ENCODE measurements at regions of chr7 and their contacts with region 1.

Region 1: DNA sequence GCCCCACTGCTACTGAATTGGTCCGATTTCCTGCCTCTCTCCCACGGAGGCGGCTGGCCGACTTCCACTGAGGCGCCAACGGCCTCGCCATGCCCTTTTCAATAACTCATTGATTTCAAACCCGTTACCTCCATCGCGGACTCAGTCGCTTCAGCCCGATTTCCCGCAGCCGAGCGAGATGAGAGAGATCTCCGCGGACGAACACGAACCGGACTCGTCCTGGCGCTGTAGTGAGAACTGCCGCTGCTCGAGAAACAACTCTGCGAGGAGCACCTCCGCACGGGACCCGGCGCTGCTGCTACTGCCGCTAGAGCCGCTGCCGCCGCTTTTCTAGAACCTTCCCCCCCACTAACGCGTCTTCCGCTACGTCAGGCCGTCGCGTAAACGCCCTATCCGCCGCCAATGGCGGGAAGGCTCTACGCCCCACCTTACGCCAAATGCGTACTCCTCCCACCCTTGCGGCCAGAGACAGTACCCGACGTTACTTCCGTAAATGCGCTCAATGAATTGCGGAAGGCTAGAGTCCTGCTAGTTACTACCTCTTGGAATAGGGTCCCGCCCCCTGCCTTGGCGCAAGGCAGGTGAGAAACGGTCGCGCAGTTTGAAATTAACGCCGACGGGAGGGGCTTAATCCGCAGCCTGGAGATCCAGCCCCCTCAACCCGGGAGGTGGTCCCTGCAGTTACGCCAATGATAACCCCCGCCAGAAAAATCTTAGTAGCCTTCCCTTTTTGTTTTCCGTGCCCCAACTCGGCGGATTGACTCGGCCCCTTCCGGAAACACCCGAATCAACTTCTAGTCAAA is at the start of gene HNRNPA2B1:
- DNase-seq: peak; percentile 98
- ATAC-seq: peak; percentile 71
- H3K4me3 ChIP-seq: peak within 1 kb of the TSS; percentile 99
- H3K27ac ChIP-seq: peak within 1 kb of the TSS; percentile 99
- H3K4me1 ChIP-seq: peaks cover 43% of the 10 kb centered on the region
- H3K27me3 ChIP-seq: no peaks in the 10 kb centered on the region; a peak in 1 of 5 replicates
- CTCF ChIP-seq: peak; percentile 12; the same call in 1 of the 2 replicates
- EP300 ChIP-seq: no peak; a peak in 1 of 4 replicates
- POLR2A ChIP-seq: peak; percentile 99 to 100
- RAD21 ChIP-seq: peak; percentile 33; the same call in 1 of the 2 replicates
- total RNA-seq, gene HNRNPA2B1: 412 and 636 TPM in 2 replicates

Region 2: GRCh38 chr7:25894902-25895791 is 305.5 kb before region 1 on chr7:
- CTCF ChIA-PET with region 1: no interaction called
- POLR2A ChIA-PET with region 1: no interaction called
- in situ Hi-C with region 1: no loop called
- intact Hi-C with region 1: loop called (anchors 5 kb)
- DNase-seq: no peak
- ATAC-seq: peak; percentile 76
- H3K4me3 ChIP-seq: no peak overlapping the region; a peak in 1 of 6 replicates
- H3K27ac ChIP-seq: no peak overlapping the region
- H3K4me1 ChIP-seq: peaks cover 21% of the 10 kb centered on the region
- H3K27me3 ChIP-seq: peaks cover 0 to under 1% of the 10 kb centered on the region in 2 experiments; a peak in 1 of 5 replicates
- CTCF ChIP-seq: peak; percentile 60
- EP300 ChIP-seq: no peak
- POLR2A ChIP-seq: no peak
- RAD21 ChIP-seq: 0 out of 2 replicates have a peak, but pooled peaks have one; percentile 10

Region 3: DNA sequence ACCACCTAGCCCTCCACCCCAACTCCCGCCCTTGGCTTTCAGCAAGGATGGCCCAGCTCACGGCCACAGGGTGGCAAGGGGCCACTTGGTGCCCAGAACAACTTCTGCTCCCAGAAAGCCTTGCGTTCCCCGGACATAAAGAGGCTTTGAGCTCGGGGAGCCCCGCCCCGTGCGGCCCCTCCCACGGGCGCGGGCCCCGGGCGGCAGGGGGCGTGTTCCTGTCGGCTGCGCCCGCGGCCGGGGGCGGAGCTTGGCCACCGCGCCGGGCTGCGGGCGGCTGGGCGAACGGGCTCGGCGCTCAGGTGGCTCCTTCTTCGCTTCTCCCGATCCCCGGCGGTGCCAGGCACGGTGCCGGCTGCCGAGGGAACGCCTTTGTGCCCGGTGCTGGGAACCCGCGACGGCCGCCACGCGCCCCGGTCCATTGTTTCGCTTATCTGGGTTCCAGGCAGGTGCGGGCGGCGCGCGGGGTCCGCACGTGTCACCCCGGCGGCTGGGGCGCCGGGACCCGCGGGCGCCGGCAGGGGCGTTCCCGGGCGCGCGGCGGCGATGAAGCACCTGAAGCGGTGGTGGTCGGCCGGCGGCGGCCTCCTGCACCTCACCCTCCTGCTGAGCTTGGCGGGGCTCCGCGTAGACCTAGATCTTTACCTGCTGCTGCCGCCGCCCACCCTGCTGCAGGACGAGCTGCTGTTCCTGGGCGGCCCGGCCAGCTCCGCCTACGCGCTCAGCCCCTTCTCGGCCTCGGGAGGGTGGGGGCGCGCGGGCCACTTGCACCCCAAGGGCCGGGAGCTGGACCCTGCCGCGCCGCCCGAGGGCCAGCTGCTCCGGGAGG is 48.5 kb before region 1 on chr7 and contains the start of gene NFE2L3:
- CTCF ChIA-PET with region 1: no interaction called
- POLR2A ChIA-PET with region 1: interaction called, 36 read pairs
- in situ Hi-C with region 1: no loop called
- intact Hi-C with region 1: loop called (anchors 2 kb)
- DNase-seq: peak; percentile 76
- ATAC-seq: peak; percentile 83
- H3K4me3 ChIP-seq: peak within 1 kb of the TSS; percentile 58 to 72 (median 70)
- H3K27ac ChIP-seq: no peak within 1 kb of the TSS
- H3K4me1 ChIP-seq: peaks cover 53% of the 10 kb centered on the region
- H3K27me3 ChIP-seq: peaks cover 0 to 13% of the 10 kb centered on the region in 2 experiments; a peak in 3 of 5 replicates
- CTCF ChIP-seq: peak; percentile 48; the same call in 1 of the 2 replicates
- EP300 ChIP-seq: no peak
- POLR2A ChIP-seq: peak; percentile 34 to 69; a peak in 3 of 4 replicates
- RAD21 ChIP-seq: peak; percentile 19
- total RNA-seq, gene NFE2L3: 8.8 and 19.4 TPM in 2 replicates

Region 4: DNA sequence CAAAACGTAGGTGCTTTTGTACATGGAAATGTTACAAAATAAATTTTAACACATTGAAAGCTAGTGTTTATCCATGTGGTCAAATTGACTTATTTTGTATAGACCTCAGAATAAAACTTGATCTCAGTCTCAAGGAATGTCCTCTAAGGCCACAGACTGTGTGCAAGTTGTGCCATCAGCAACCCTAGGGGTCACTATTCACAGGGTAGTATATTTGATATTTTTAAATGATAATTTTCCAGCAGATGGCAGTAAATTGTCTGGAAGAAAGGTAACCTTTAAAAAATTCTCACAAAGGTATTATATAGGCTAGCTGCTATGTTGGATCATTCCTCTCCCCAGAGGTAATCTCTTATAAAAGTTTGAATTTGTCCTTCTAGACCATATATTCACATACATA is 78.1 kb after region 1 on chr7:
- CTCF ChIA-PET with region 1: no interaction called
- POLR2A ChIA-PET with region 1: interaction called, 4 read pairs
- in situ Hi-C with region 1: no loop called
- intact Hi-C with region 1: loop called (anchors 2 kb)
- DNase-seq: peak; percentile 49
- ATAC-seq: peak; percentile 79
- H3K4me3 ChIP-seq: peak overlapping the region in 2 of 3 experiments; percentile 58 to 64; a peak in 4 of 6 replicates
- H3K27ac ChIP-seq: no peak overlapping the region
- H3K4me1 ChIP-seq: peaks cover 21% of the 10 kb centered on the region
- H3K27me3 ChIP-seq: no peaks in the 10 kb centered on the region
- CTCF ChIP-seq: peak; percentile 51
- EP300 ChIP-seq: no peak
- POLR2A ChIP-seq: no peak
- RAD21 ChIP-seq: no peak

Region 5: DNA sequence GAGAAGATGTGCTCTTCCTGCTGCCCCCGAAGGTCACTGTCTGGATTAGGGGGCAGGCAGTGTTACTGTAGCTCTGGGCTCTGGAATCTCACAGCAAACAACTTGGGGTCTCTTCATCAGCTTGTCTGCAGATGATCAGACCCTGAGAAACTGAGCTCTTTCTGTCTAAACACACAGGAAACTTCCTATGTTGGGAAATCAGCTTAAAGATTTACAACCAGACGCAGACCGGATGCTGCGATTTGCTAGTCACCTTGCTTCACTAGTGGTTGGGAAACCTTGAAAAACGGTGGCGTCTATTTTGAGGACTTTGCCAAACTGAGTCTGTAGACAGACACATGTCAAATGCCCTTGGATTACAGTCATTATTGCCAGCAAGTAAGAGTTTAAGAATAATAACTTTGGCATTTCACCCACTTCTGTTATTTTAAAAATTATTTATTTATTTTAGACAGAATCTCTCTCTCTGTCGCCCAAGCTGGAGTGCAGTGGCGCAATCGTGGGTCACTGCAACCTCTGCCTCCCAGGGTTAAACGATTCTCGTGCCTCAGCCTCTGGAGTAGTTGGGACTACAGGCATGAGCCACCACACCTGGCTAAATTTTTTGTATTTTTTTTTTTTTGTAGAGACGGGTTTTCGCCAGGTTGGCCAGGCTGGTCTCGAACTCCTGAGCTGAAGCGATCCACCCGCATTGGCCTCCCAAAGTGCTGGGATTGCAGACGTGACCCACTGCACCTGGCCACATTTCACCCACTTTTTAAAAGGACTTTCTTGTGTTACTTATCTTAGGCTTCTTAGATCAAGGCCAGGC is 105.0 kb after region 1 on chr7:
- CTCF ChIA-PET with region 1: no interaction called
- POLR2A ChIA-PET with region 1: interaction called, 14 read pairs
- in situ Hi-C with region 1: no loop called
- intact Hi-C with region 1: no loop called
- DNase-seq: peak; percentile 83
- ATAC-seq: peak; percentile 79
- H3K4me3 ChIP-seq: peak overlapping the region in 2 of 3 experiments; percentile 15 to 22; a peak in 4 of 6 replicates
- H3K27ac ChIP-seq: peak overlapping the region; percentile 72
- H3K4me1 ChIP-seq: peaks cover 55% of the 10 kb centered on the region
- H3K27me3 ChIP-seq: no peaks in the 10 kb centered on the region
- CTCF ChIP-seq: no peak
- EP300 ChIP-seq: peak in 1 of 2 experiments; percentile 68; a peak in 1 of 4 replicates
- POLR2A ChIP-seq: peak in 1 of 2 experiments; percentile 35; a peak in 1 of 4 replicates
- RAD21 ChIP-seq: no peak

Region 6: DNA sequence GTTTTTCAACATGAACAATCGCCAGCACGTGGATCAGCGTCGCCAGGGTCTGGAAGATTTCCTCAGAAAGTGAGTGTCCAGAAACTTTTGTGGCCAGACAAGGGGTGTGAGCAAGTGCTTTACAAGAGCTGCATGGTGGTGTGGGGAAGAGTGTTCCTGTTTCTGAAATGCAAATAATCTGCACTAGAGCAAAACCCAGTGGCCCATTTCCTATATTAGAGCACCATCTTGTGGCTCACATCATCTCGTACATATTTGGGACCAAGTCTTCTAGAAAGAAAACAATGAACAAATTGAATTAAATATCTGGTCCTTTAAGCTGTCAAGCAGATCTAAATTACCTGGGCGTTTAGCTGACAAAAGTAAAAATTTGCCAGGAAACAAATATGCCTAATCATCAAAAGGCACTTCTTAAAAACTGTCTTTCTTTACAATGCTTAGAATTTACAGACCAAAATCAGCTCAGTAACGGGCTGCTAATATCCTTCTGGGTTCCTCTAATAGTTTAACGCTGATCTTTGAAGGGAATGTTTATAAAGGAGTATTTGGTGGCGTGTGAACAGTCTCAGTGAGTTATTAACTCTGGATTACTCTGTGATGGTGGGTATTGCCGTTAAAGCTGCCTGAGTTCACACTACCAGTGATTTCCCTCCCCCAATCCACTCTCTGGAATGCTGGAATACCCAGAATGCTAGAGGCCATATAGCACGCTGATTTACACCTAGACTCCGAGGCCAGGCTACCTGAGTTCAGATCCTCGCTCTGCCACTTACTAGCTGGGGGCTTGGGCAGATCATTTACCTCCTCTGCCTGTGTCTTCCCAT is 164.6 kb after region 1 on chr7:
- CTCF ChIA-PET with region 1: no interaction called
- POLR2A ChIA-PET with region 1: interaction called, 4 read pairs
- in situ Hi-C with region 1: loop called (anchors 10 kb)
- intact Hi-C with region 1: loop called (anchors 5 kb)
- DNase-seq: peak; percentile 65
- ATAC-seq: peak; percentile 69; the same call in 2 of the 3 replicates
- H3K4me3 ChIP-seq: no peak overlapping the region
- H3K27ac ChIP-seq: no peak overlapping the region
- H3K4me1 ChIP-seq: peaks cover 37% of the 10 kb centered on the region
- H3K27me3 ChIP-seq: no peaks in the 10 kb centered on the region
- CTCF ChIP-seq: peak; percentile 81
- EP300 ChIP-seq: no peak
- POLR2A ChIP-seq: no peak
- RAD21 ChIP-seq: peak; percentile 82